PC-9 (cell line): ENCODE measurements at regions of chr4 and their contacts with region 1.

Region 1: GRCh38 chr4:141158219-141158618 is 24.9 kb upstream of the RNF150 start:
- DNase-seq: no peak
- H3K4me3 ChIP-seq: no peak overlapping the region
- H3K27ac ChIP-seq: no peak overlapping the region
- H3K4me1 ChIP-seq: no peaks in the 10 kb centered on the region
- H3K27me3 ChIP-seq: no peaks in the 10 kb centered on the region
- CTCF ChIP-seq: peak; percentile 73

Region 2: DNA sequence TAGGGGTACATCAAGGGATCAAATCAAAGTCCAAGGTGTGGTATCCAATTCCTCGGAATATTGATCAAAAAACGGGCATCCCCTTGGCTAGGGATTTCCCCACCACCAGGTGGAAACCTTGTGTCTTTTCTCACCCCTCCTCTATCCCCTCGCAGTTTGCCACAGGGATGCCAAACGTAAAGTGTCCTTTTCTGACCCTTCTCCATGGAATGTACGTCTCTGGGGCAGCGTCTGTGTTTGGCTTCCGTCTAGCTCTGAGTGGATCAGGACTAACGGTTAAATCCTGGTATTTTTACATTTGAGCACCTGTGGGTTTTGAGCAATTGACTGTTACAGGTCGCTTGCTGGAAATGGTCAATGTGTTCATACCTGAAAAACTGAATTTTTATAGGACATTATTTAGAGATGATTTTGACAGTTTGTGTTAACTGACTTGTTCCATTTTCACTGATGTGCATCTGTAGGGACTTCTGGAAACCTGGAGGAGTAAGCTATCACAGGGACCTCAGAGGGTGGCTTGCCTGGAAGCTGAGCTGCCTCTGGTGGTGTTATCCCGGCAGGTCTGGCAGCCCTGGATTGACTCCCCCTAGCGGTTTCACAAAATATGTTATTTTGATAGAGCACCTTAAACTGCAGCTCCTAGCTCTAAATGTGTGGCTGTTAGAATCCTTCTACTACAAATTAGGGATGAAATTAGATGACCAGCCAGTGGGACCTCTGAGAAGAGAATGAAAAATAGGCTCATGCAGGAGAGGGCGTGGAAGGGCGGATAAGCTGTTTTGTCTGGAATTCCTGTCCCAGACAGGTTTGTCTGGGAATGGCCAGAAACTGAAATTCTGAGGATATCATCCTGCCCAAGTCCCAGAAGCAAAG is 1501.4 kb before region 1 on chr4:
- CTCF ChIA-PET with region 1: no interaction called
- POLR2A ChIA-PET with region 1: no interaction called
- intact Hi-C with region 1: loop called (anchors 5 kb)
- DNase-seq: peak in 1 of 2 experiments; percentile 53
- H3K4me3 ChIP-seq: no peak overlapping the region
- H3K27ac ChIP-seq: no peak overlapping the region
- H3K4me1 ChIP-seq: peaks cover 19% of the 10 kb centered on the region
- H3K27me3 ChIP-seq: no peaks in the 10 kb centered on the region
- CTCF ChIP-seq: peak; percentile 85

Region 3: GRCh38 chr4:140595065-140595464 is 563.2 kb before region 1 on chr4:
- CTCF ChIA-PET with region 1: no interaction called
- POLR2A ChIA-PET with region 1: no interaction called
- intact Hi-C with region 1: loop called (anchors 1 kb)
- DNase-seq: peak; percentile 40 to 46
- H3K4me3 ChIP-seq: no peak overlapping the region
- H3K27ac ChIP-seq: no peak overlapping the region
- H3K4me1 ChIP-seq: no peaks in the 10 kb centered on the region
- H3K27me3 ChIP-seq: no peaks in the 10 kb centered on the region
- CTCF ChIP-seq: peak; percentile 67

Region 4: GRCh38 chr4:140861359-140862176 is 296.7 kb before region 1 on chr4:
- CTCF ChIA-PET with region 1: no interaction called
- POLR2A ChIA-PET with region 1: no interaction called
- intact Hi-C with region 1: loop called (anchors 1 kb)
- DNase-seq: peak; percentile 48 to 51
- H3K4me3 ChIP-seq: no peak overlapping the region
- H3K27ac ChIP-seq: no peak overlapping the region
- H3K4me1 ChIP-seq: peaks cover 13% of the 10 kb centered on the region
- H3K27me3 ChIP-seq: no peaks in the 10 kb centered on the region
- CTCF ChIP-seq: peak; percentile 79

Region 5: GRCh38 chr4:140996766-140997165 is 161.5 kb before region 1 on chr4:
- CTCF ChIA-PET with region 1: interaction called, 12 read pairs
- POLR2A ChIA-PET with region 1: no interaction called
- intact Hi-C with region 1: no loop called
- DNase-seq: no peak
- H3K4me3 ChIP-seq: no peak overlapping the region
- H3K27ac ChIP-seq: no peak overlapping the region
- H3K4me1 ChIP-seq: no peaks in the 10 kb centered on the region
- H3K27me3 ChIP-seq: no peaks in the 10 kb centered on the region
- CTCF ChIP-seq: no peak

Region 6: GRCh38 chr4:141307241-141307689 is 149.0 kb after region 1 on chr4:
- CTCF ChIA-PET with region 1: no interaction called
- POLR2A ChIA-PET with region 1: no interaction called
- intact Hi-C with region 1: loop called (anchors 10 kb)
- DNase-seq: peak; percentile 43
- H3K4me3 ChIP-seq: no peak overlapping the region
- H3K27ac ChIP-seq: no peak overlapping the region
- H3K4me1 ChIP-seq: no peaks in the 10 kb centered on the region
- H3K27me3 ChIP-seq: no peaks in the 10 kb centered on the region
- CTCF ChIP-seq: peak; percentile 66

Region 7: DNA sequence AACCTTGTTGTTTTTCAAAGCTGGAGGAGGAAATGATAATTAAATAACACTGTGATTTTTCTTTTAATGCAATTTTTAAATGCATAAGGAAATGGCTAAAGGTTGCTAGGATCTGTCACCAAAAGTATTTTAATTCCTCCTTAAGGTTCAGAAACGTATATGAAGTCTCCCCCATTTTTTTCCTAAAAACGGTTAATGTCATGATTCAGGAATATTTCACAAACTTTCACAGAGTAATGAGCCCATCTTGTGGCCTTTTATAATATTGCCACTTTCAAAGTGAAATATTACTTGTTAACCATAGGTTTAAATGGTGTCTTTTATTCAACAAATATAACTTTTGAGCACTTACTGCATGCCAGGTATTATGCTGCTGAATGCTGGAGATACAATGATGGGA is 1927.0 kb after region 1 on chr4:
- CTCF ChIA-PET with region 1: no interaction called
- POLR2A ChIA-PET with region 1: no interaction called
- intact Hi-C with region 1: loop called (anchors 5 kb)
- DNase-seq: no peak
- H3K4me3 ChIP-seq: no peak overlapping the region
- H3K27ac ChIP-seq: no peak overlapping the region
- H3K4me1 ChIP-seq: no peaks in the 10 kb centered on the region
- H3K27me3 ChIP-seq: no peaks in the 10 kb centered on the region
- CTCF ChIP-seq: peak; percentile 54